ENCODE measurements at regions of chr2 and their contacts with region 1.

Region 1: GRCh38 chr2:96788442-96789244 is 27.4 kb upstream of the CNNM3 start:
- DNase-seq: peak; percentile 51 to 67
- H3K4me3 ChIP-seq: no peak overlapping the region
- H3K27ac ChIP-seq: peak overlapping the region; percentile 73
- H3K4me1 ChIP-seq: peaks cover 42% of the 10 kb centered on the region
- H3K27me3 ChIP-seq: no peaks in the 10 kb centered on the region
- CTCF ChIP-seq: no peak

Region 2: DNA sequence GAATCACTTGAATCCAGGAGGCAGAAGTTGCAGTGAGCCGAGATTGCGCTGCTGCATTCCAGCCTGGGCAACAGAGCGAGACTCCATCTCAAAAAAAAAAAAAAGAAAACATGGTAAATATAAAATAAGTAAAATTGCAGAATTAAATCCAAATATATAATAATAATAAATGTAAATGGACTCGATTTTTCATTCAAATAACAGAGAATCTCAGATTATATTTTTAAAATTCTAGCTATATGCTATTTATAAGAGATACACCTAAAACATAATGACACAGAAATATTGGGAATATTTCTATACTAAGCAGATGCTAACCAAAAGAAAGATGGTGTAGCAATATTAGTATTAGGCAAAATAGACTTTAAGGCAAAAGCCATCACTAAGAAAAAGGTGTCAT is 268.4 kb before region 1 on chr2:
- CTCF ChIA-PET with region 1: no interaction called
- POLR2A ChIA-PET with region 1: interaction called, 12 read pairs
- intact Hi-C with region 1: no loop called
- DNase-seq: no peak
- H3K4me3 ChIP-seq: no peak overlapping the region
- H3K27ac ChIP-seq: no peak overlapping the region
- H3K4me1 ChIP-seq: no peaks in the 10 kb centered on the region
- H3K27me3 ChIP-seq: peaks cover 15% of the 10 kb centered on the region; the same call in 1 of the 2 replicates
- CTCF ChIP-seq: no peak

Region 3: GRCh38 chr2:96773922-96774321 is 14.7 kb before region 1 on chr2:
- CTCF ChIA-PET with region 1: interaction called, 6 read pairs
- POLR2A ChIA-PET with region 1: interaction called, 19 read pairs
- intact Hi-C with region 1: loop called (anchors 1 kb)
- DNase-seq: no peak
- H3K4me3 ChIP-seq: no peak overlapping the region
- H3K27ac ChIP-seq: no peak overlapping the region
- H3K4me1 ChIP-seq: peaks cover 44% of the 10 kb centered on the region
- H3K27me3 ChIP-seq: no peaks in the 10 kb centered on the region
- CTCF ChIP-seq: no peak

Region 4: GRCh38 chr2:96832754-96833507 is 44.3 kb after region 1 on chr2:
- CTCF ChIA-PET with region 1: no interaction called
- POLR2A ChIA-PET with region 1: interaction called, 10 read pairs
- intact Hi-C with region 1: no loop called
- DNase-seq: peak; percentile 90 to 94
- H3K4me3 ChIP-seq: peak overlapping the region; percentile 30; the same call in 1 of the 2 replicates
- H3K27ac ChIP-seq: peak overlapping the region; percentile 86
- H3K4me1 ChIP-seq: peaks cover 25% of the 10 kb centered on the region
- H3K27me3 ChIP-seq: no peaks in the 10 kb centered on the region
- CTCF ChIP-seq: no peak

Region 5: DNA sequence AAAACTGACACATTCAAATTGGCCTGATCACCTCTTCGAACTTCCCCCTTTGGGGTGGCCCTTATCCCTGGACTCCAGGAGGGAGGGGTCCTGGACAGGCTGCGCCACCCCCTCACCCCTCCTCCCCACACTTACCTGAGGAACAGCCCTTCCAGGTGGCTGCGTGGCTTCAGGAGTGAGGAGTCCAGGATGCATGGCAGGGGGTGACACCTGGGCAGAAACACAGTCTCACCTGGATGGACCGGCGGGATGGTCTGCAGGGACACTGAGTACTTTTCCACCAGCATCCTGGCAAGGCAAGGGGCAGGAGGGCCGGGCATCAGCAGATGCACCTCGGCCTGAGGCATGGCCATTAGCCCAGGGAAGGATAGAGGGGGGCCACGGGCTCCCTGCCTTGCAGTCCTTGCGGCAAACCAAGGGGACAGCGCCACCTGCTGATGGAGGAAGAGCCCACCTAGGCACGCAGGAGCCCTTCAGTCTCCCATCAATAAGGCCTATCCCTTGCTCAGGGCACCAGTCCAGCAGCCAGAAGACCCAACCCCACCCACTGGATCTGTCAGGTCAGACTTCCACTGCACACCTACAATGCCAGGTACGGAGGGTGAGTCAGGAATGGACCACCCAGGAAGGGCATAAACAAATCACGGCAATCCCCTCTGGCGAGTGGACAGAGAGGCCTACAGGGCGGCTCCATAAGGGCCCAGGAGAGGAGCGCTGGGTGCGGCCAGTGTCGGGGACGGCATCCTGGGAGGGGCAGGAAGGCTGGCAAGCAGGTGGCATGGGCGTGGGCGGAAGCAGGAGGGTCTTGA is 171.7 kb after region 1 on chr2:
- CTCF ChIA-PET with region 1: interaction called, 11 read pairs
- POLR2A ChIA-PET with region 1: no interaction called
- intact Hi-C with region 1: no loop called
- DNase-seq: peak; percentile 78 to 91
- H3K4me3 ChIP-seq: no peak overlapping the region
- H3K27ac ChIP-seq: no peak overlapping the region
- H3K4me1 ChIP-seq: no peaks in the 10 kb centered on the region
- H3K27me3 ChIP-seq: no peaks in the 10 kb centered on the region
- CTCF ChIP-seq: peak; percentile 99

Region 6: GRCh38 chr2:96985181-96985945 is 196.7 kb after region 1 on chr2:
- CTCF ChIA-PET with region 1: no interaction called
- POLR2A ChIA-PET with region 1: no interaction called
- intact Hi-C with region 1: no loop called
- DNase-seq: no peak
- H3K4me3 ChIP-seq: no peak overlapping the region
- H3K27ac ChIP-seq: no peak overlapping the region
- H3K4me1 ChIP-seq: no peaks in the 10 kb centered on the region
- H3K27me3 ChIP-seq: peaks cover 82% of the 10 kb centered on the region
- CTCF ChIP-seq: no peak

Measured in PC-9 (cell line).